ENCODE measurements at regions of chr11 and their contacts with region 1.

Region 1: GRCh38 chr11:16613512-16614381 is 124.7 kb upstream of the C11orf58 start:
- DNase-seq: peak; percentile 93

Region 2: GRCh38 chr11:15327786-15328231 is 1285.9 kb before region 1 on chr11:
- intact Hi-C with region 1: loop called (anchors 5 kb)
- DNase-seq: peak; percentile 79

Region 3: GRCh38 chr11:15650105-15650938 is 963.4 kb before region 1 on chr11:
- intact Hi-C with region 1: loop called (anchors 5 kb)
- DNase-seq: peak; percentile 97

Region 4: GRCh38 chr11:15911377-15912044 is 702.2 kb before region 1 on chr11:
- intact Hi-C with region 1: loop called (anchors 5 kb)
- DNase-seq: peak; percentile 81

Region 5: GRCh38 chr11:16239141-16240105 is 374.3 kb before region 1 on chr11:
- intact Hi-C with region 1: loop called (anchors 5 kb)
- DNase-seq: no peak

Region 6: DNA sequence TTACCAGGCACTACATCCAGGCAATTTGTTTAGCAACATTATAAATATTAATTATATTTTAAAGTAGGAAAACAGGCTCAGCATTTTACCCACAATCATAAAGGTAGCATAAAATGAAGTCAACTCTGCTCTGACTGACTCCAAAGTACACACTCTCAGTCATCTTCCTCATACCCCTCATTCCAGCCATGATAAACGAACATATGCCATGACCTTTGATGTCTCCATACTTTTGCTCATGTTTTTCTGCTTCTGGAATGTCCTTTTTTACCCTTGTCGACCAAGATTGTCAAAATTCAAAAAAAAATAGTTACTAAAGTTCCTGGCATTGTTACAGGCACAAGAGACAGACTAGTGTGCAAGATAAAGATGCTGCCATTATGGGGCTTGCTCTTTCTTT is 179.7 kb before region 1 on chr11:
- intact Hi-C with region 1: no loop called
- DNase-seq: no peak

Region 7: DNA sequence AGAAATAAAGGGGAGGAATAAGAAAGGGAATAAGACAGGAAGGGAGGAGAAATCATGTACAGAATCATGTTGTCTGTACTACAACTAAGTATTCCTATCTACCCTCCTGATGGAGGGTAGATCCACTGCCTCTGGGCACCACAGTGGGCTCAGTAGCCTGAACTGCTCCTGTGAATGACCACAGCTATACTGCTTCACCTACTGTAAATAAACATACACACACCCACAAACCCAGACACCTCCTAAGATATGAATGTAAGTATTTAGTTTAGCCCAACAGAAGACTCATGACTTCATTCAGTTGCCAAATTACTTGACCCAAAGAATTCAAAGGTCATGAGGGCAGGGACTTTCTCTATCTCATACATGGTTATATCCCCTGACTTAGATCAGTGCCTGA is 52.6 kb before region 1 on chr11:
- intact Hi-C with region 1: no loop called
- DNase-seq: no peak

Region 8: DNA sequence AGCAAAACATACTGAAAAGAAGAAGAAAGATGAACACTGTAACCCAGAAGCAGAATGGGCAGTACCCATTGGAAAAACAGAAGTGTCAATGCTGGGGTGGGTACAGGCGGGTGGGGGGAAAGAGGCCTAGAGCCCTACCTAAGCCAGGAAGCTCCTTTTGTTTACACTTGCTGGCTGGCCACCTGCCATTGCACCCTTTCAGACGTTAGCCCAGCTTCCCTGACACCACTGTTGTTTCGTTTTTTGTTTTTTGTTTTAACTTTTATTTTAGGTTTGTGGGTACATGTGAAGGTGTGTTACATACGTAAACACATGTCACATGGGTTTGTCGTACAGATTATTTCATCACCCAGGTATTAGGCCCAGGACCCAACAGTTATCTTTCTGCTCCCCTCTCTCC is 345.1 kb after region 1 on chr11:
- intact Hi-C with region 1: no loop called
- DNase-seq: no peak

Measured in cardiac septum (tissue), 1 donor.